ENCODE measurements at regions of chr10 and their contacts with region 1.

Region 1: GRCh38 chr10:75294866-75295701 is 59.3 kb upstream of the COMTD1 start:
- DNase-seq: peak; percentile 96
- H3K4me3 ChIP-seq: peak overlapping the region; percentile 55 to 69 (median 64)
- H3K27ac ChIP-seq: peak overlapping the region; percentile 86 to 91 (median 88)
- H3K4me1 ChIP-seq: peaks cover 20 to 44% (median 39%) of the 10 kb centered on the region in 4 donors
- H3K27me3 ChIP-seq: no peaks in the 10 kb centered on the region
- CTCF ChIP-seq: peak; percentile 4 to 37 (median 24)
- EP300 ChIP-seq: no peak
- POLR2A ChIP-seq: no peak

Region 2: DNA sequence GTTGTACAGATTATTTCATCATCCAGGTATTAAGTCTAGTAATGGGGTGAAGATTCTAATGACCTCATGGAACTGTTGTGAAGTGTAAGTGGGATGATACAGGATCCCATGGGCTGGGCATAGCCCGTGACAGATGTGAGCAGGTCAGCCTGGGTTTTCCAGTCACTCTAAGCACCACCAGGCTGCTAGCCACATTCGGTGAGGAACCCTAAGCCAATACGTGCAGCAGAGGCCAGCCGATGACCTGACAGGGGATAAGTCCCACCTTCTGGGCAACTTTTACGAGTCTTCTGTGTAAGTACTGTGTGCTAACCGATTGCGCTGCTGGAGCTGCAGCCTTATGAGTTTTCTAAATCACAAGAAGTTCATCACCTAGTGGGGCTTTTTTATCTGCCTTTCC is 99.1 kb after region 1 on chr10:
- intact Hi-C with region 1: loop called (anchors 5 kb)
- DNase-seq: no peak
- H3K4me3 ChIP-seq: no peak overlapping the region
- H3K27ac ChIP-seq: peak overlapping the region in 1 of 4 donors; percentile 100
- H3K4me1 ChIP-seq: peaks cover 8 to 35% (median 27%) of the 10 kb centered on the region in 4 donors
- H3K27me3 ChIP-seq: no peaks in the 10 kb centered on the region
- CTCF ChIP-seq: no peak
- EP300 ChIP-seq: no peak
- POLR2A ChIP-seq: no peak

Region 3: GRCh38 chr10:75431180-75432111 is 136.4 kb after region 1 on chr10 and contains the start of gene LRMDA:
- intact Hi-C with region 1: no loop called
- DNase-seq: no peak
- H3K4me3 ChIP-seq: peak within 1 kb of the TSS; percentile 72 to 90 (median 84)
- H3K27ac ChIP-seq: peak within 1 kb of the TSS; percentile 60 to 86 (median 80)
- H3K4me1 ChIP-seq: peaks cover 40 to 58% (median 55%) of the 10 kb centered on the region in 4 donors
- H3K27me3 ChIP-seq: no peaks in the 10 kb centered on the region
- CTCF ChIP-seq: no peak
- EP300 ChIP-seq: no peak
- POLR2A ChIP-seq: no peak
- total RNA-seq, gene LRMDA: 14.3 to 34.9 (median 26.5) TPM

Region 4: GRCh38 chr10:75651417-75651816 is 356.3 kb after region 1 on chr10:
- intact Hi-C with region 1: loop called (anchors 10 kb)
- DNase-seq: no peak
- H3K4me3 ChIP-seq: no peak overlapping the region
- H3K27ac ChIP-seq: peak overlapping the region in 1 of 4 donors; percentile 16
- H3K4me1 ChIP-seq: peaks cover 8 to 77% (median 68%) of the 10 kb centered on the region in 4 donors
- H3K27me3 ChIP-seq: no peaks in the 10 kb centered on the region
- CTCF ChIP-seq: peak in 1 of 3 experiments; percentile 19
- EP300 ChIP-seq: no peak
- POLR2A ChIP-seq: no peak

Measured in esophagus muscularis mucosa (tissue), 4 donors.